PC-3 (cell line): ENCODE measurements at regions of chr7 and their contacts with region 1.

Region 1: GRCh38 chr7:126657599-126658358 is 595.0 kb downstream of the GRM8 start:
- DNase-seq: no peak
- ATAC-seq: no peak
- H3K4me3 ChIP-seq: no peak overlapping the region
- H3K27ac ChIP-seq: no peak overlapping the region
- H3K4me1 ChIP-seq: no peaks in the 10 kb centered on the region
- H3K27me3 ChIP-seq: no peaks in the 10 kb centered on the region
- CTCF ChIP-seq: no peak

Region 2: GRCh38 chr7:127347567-127348246 is 689.9 kb after region 1 on chr7:
- CTCF ChIA-PET with region 1: no interaction called
- POLR2A ChIA-PET with region 1: interaction called, 10 read pairs
- intact Hi-C with region 1: no loop called
- DNase-seq: peak; percentile 38
- ATAC-seq: peak; percentile 97
- H3K4me3 ChIP-seq: peak overlapping the region; percentile 37; the same call in 1 of the 2 replicates
- H3K27ac ChIP-seq: no peak overlapping the region
- H3K4me1 ChIP-seq: no peaks in the 10 kb centered on the region
- H3K27me3 ChIP-seq: no peaks in the 10 kb centered on the region
- CTCF ChIP-seq: 0 out of 2 replicates have a peak, but pooled peaks have one; percentile 9